PC-9 (cell line): ENCODE measurements at regions of chr7 and their contacts with region 1.

Region 1: DNA sequence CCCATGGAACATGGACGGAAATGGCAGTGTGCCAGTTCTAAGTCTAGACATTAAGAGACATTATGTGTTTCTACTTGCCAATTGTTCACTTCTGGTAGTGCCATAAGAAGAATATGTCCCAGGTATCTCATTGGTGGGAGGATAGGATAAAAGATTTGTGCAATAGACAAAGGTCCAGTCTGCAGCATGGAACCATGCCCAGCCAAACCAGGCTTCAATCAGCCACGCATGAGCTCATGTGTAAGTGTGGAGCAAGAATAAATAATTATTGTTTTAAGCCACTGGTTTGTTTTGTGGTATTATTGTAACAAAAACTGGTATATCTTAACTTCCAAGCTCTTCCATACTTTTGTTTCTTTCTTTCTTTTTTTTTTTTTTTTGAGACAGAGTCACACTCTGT is 153.6 kb upstream of the CTTNBP2 start:
- DNase-seq: no peak
- H3K4me3 ChIP-seq: no peak overlapping the region
- H3K27ac ChIP-seq: no peak overlapping the region
- H3K4me1 ChIP-seq: no peaks in the 10 kb centered on the region
- H3K27me3 ChIP-seq: no peaks in the 10 kb centered on the region
- CTCF ChIP-seq: no peak

Region 2: GRCh38 chr7:117946151-117946633 is 80.6 kb before region 1 on chr7:
- CTCF ChIA-PET with region 1: no interaction called
- POLR2A ChIA-PET with region 1: no interaction called
- intact Hi-C with region 1: no loop called
- DNase-seq: no peak
- H3K4me3 ChIP-seq: no peak overlapping the region
- H3K27ac ChIP-seq: no peak overlapping the region
- H3K4me1 ChIP-seq: no peaks in the 10 kb centered on the region
- H3K27me3 ChIP-seq: no peaks in the 10 kb centered on the region
- CTCF ChIP-seq: no peak

Region 3: GRCh38 chr7:118000480-118001202 is 26.1 kb before region 1 on chr7:
- CTCF ChIA-PET with region 1: interaction called, 10 read pairs
- POLR2A ChIA-PET with region 1: no interaction called
- intact Hi-C with region 1: no loop called
- DNase-seq: no peak
- H3K4me3 ChIP-seq: no peak overlapping the region
- H3K27ac ChIP-seq: no peak overlapping the region
- H3K4me1 ChIP-seq: peaks cover 8% of the 10 kb centered on the region; the same call in 1 of the 2 replicates
- H3K27me3 ChIP-seq: no peaks in the 10 kb centered on the region
- CTCF ChIP-seq: no peak

Region 4: DNA sequence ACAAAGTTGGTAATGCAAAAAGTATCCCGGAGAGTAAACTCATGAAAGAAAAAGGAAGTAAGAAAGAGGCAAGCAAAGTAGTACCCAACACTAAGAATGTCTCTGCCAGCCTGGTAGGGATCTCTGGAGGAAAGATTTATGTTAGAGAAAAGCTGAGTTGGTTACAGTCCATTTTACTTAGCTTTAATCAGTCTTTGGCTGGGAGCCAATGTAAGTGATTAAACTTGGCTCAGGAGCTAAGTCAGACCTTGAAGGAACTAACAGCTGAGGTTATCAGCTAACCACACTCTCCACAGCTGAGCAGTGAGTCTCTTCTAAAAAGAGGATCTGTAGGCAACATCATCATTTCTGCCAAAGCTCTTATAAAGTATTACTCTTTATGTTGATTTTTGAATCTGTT is 345.7 kb after region 1 on chr7:
- CTCF ChIA-PET with region 1: no interaction called
- POLR2A ChIA-PET with region 1: no interaction called
- intact Hi-C with region 1: no loop called
- DNase-seq: no peak
- H3K4me3 ChIP-seq: no peak overlapping the region
- H3K27ac ChIP-seq: no peak overlapping the region
- H3K4me1 ChIP-seq: no peaks in the 10 kb centered on the region
- H3K27me3 ChIP-seq: no peaks in the 10 kb centered on the region
- CTCF ChIP-seq: no peak